H1 (cell line): ENCODE measurements at regions of chr7 and their contacts with region 1.

Region 1: DNA sequence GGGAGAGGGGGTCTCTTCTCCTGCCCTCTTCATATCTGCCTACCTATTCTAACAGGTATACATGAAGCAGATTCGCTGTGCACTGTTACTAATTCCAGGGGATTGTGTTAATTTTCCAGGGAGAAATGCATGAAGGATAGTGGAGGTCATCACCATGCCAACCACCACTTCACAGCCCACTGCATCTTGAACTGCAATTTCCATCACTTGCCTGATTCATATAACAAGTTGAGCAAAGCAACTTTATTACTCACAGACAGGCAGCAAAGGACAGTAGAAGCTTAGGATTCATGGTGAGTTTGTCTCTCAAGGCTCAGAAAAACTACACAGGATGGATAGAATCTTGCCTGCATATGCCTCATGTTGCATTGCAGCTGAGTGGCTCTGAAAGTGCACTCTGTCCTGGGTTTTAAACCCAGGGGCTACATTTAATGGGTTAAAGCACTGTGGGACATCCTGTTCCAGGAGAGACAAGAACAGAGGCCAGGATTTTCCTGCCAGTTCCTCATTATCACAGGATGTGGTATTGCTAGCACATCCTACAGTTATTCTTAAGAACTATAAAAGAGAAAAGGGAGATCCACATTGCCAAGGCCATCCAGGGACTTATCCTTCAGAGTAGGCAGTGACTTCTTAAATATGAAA is 136.9 kb upstream of the PRSS1 start:
- DNase-seq: no peak
- H3K4me3 ChIP-seq: no peak overlapping the region
- H3K27ac ChIP-seq: no peak overlapping the region
- H3K4me1 ChIP-seq: peaks cover 0 to 2% (median 1%) of the 10 kb centered on the region in 4 experiments; a peak in 2 of 7 replicates
- H3K27me3 ChIP-seq: no peaks in the 10 kb centered on the region
- CTCF ChIP-seq: no peak
- EP300 ChIP-seq: no peak
- POLR2A ChIP-seq: no peak
- RAD21 ChIP-seq: no peak

Region 2: DNA sequence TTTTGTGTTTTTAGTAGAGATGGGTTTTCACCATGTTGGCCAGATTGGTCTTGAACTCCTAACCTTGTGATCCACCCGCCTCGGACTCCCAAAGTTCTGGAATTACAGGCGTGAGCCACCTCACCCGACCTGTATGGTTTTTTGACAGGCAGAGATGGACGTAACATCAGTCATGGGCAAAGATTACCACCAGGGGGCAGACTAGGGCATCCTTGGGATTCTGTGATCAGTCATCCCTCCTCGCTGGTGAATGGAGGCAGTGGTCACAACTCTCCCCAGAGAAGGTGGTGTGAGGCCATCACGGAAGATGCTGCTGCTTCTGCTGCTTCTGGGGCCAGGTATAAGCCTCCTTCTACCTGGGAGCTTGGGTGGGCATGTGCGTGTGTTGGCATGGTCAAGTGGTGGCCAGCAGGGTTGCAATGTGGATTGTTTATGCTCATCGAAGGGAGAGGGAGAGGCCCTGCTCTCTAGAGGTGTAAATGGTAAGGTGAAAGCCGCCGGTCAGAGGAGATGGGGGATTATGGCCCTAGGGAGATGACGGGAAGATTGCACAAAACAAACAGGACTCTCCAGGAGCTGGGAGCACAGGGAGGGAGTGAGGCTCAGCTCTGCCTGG is 14.2 kb after region 1 on chr7:
- CTCF ChIA-PET with region 1: interaction called, 16 read pairs
- POLR2A ChIA-PET with region 1: interaction called, 3 read pairs
- DNase-seq: peak in 1 of 2 experiments; percentile 94
- H3K4me3 ChIP-seq: no peak overlapping the region
- H3K27ac ChIP-seq: no peak overlapping the region
- H3K4me1 ChIP-seq: peaks cover 0 to 3% (median 0%) of the 10 kb centered on the region in 4 experiments; a peak in 1 of 7 replicates
- H3K27me3 ChIP-seq: no peaks in the 10 kb centered on the region; a peak in 1 of 7 replicates
- CTCF ChIP-seq: peak; percentile 60 to 85 (median 79)
- EP300 ChIP-seq: no peak
- POLR2A ChIP-seq: no peak
- RAD21 ChIP-seq: peak; percentile 55 to 62

Region 3: DNA sequence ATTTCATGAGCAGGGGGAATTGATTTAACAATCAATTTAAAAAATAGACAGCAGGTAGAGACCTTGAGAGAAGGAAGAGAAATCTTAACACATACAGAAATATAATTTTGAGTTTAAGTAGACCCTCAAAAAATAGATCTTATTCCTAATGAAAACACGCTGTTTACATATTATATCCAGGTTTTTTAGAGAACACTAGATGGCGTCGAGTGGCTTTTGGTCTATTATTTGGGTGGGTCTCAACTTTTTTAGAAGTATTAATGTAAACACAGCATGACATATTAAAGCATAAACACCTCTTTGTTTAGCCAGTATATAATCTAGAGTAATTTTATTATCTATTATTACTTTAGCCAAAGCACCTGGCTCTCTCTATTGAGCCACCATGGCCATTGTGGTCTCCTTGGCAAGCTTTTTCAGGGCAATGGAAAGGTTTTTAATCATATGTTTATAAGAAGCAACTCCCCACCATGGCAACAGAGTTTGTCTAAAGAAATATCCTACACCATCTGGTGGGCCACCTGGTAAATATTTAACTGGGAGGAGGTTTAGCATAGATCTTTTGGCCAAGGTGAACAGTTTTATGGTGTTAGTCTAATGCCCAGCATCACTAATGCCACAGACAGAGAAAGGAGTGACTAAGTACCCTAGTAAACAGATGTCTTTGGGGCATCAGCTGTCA is 77.2 kb after region 1 on chr7:
- CTCF ChIA-PET with region 1: no interaction called
- POLR2A ChIA-PET with region 1: no interaction called
- DNase-seq: no peak
- H3K4me3 ChIP-seq: no peak overlapping the region
- H3K27ac ChIP-seq: no peak overlapping the region
- H3K4me1 ChIP-seq: no peaks in the 10 kb centered on the region
- H3K27me3 ChIP-seq: no peaks in the 10 kb centered on the region
- CTCF ChIP-seq: peak in 2 of 3 experiments; percentile 10 to 29; a peak in 2 of 4 replicates
- EP300 ChIP-seq: no peak
- POLR2A ChIP-seq: no peak
- RAD21 ChIP-seq: peak; percentile 38 to 42

Region 4: GRCh38 chr7:142703655-142704305 is 91.4 kb after region 1 on chr7:
- CTCF ChIA-PET with region 1: no interaction called
- POLR2A ChIA-PET with region 1: no interaction called
- DNase-seq: no peak
- H3K4me3 ChIP-seq: no peak overlapping the region
- H3K27ac ChIP-seq: no peak overlapping the region
- H3K4me1 ChIP-seq: peaks cover 0 to 10% (median 4%) of the 10 kb centered on the region in 4 experiments; a peak in 4 of 7 replicates
- H3K27me3 ChIP-seq: no peaks in the 10 kb centered on the region
- CTCF ChIP-seq: no peak
- EP300 ChIP-seq: no peak
- POLR2A ChIP-seq: no peak
- RAD21 ChIP-seq: no peak